Left lung (tissue), 14 donors: ENCODE measurements at regions of chr9 and their contacts with region 1.

Region 1: DNA sequence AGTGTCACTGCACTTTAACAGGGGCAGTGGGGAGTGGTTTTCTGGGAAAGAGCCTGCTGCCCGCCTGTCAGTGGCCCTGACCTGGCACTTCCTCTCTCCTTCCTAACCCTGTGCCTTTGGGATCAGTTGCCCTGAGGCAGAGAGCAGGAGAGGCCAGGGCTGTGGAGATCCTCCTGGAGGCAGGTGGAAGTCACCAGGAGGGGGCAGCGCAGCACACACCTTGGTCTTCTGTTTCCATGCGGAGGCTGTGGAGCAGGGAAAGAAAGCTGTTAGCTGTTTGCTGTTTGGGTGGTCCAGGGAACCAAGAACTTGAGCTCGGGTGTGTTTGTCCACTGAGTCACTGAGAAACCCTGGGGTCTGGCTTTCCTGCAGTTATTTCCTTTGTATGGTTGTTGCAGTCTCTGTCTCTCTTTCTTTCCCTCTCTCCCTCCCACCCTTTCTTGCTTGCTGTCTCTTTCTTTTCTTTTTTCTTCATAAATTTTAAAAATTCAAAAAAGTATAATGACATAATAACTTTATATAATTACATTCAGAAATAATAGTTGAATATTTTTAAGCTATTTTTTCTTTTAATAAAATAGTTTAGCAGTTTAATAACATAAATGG is 28.1 kb downstream of the NTRK2 start:
- DNase-seq: peak; percentile 11 to 85 (median 47)
- ATAC-seq: peak; percentile 97
- H3K4me3 ChIP-seq: no peak overlapping the region
- H3K27ac ChIP-seq: no peak overlapping the region
- H3K4me1 ChIP-seq: no peaks in the 10 kb centered on the region
- H3K27me3 ChIP-seq: no peaks in the 10 kb centered on the region
- CTCF ChIP-seq: peak; percentile 38 to 57

Region 2: DNA sequence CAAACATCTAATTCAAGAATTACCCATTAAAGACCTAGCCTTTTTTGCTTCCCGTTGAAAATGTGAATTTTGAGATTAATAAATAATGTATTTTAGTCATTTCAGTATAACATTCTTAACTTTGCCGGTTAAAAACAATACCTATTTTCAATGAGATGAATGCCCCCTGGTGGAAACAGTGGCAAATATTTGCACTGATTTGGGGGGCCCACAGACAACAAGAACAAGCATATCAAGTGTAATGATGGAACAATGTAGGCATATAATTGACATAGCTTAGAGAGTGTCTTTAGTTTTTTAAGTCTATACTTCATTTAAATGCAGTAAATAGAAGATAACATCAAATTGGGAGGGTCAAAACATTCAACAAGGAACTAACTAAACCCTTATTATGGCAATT is 83.8 kb after region 1 on chr9:
- intact Hi-C with region 1: loop called in 1 of 2 experiments (anchors 10 kb)
- DNase-seq: no peak
- ATAC-seq: no peak
- H3K4me3 ChIP-seq: no peak overlapping the region
- H3K27ac ChIP-seq: no peak overlapping the region
- H3K4me1 ChIP-seq: no peaks in the 10 kb centered on the region
- H3K27me3 ChIP-seq: no peaks in the 10 kb centered on the region
- CTCF ChIP-seq: peak in 1 of 2 donors; percentile 9

Region 3: GRCh38 chr9:84953797-84954705 is 256.4 kb after region 1 on chr9:
- intact Hi-C with region 1: loop called in 1 of 2 experiments (anchors 10 kb)
- DNase-seq: peak; percentile 64 to 87 (median 74)
- ATAC-seq: peak; percentile 100
- H3K4me3 ChIP-seq: no peak overlapping the region
- H3K27ac ChIP-seq: no peak overlapping the region
- H3K4me1 ChIP-seq: peaks cover 0 to 8% of the 10 kb centered on the region in 2 donors
- H3K27me3 ChIP-seq: peaks cover 0 to 6% of the 10 kb centered on the region in 2 donors
- CTCF ChIP-seq: peak; percentile 81 to 89